Mammary epithelial cell (primary cell): ENCODE measurements at regions of chr9 and their contacts with region 1.

Region 1: GRCh38 chr9:123724211-123724796 is 205.6 kb downstream of the DENND1A start:
- DNase-seq: peak; percentile 6
- H3K4me3 ChIP-seq: no peak overlapping the region
- H3K27ac ChIP-seq: no peak overlapping the region
- H3K4me1 ChIP-seq: no peaks in the 10 kb centered on the region
- H3K27me3 ChIP-seq: no peaks in the 10 kb centered on the region
- CTCF ChIP-seq: no peak

Region 2: DNA sequence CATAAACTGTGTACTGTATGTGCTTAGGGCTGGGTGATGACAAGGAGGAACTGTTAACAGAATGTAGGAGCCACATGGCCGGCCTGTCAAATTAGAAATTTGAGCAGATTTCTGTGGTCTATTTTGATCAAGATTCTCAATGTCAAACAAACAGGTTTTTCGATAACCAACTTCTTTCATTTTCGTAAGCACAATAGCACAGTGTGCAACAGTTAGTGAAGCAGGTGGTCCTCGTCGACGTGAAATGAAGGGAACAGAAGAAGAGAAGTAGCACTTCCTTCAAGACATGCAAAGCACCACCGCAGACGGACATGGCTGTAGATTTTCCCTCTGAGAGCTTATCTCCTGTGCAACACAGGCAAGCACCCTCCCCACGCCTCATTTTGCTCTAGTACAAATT is 116.2 kb before region 1 on chr9:
- CTCF ChIA-PET with region 1: no interaction called
- dilution Hi-C with region 1: loop called (anchors 25 kb)
- in situ Hi-C with region 1: no loop called
- intact Hi-C with region 1: no loop called
- DNase-seq: no peak
- H3K4me3 ChIP-seq: no peak overlapping the region
- H3K27ac ChIP-seq: no peak overlapping the region
- H3K4me1 ChIP-seq: no peaks in the 10 kb centered on the region
- H3K27me3 ChIP-seq: no peaks in the 10 kb centered on the region
- CTCF ChIP-seq: no peak

Region 3: GRCh38 chr9:123631862-123632261 is 92.4 kb before region 1 on chr9:
- CTCF ChIA-PET with region 1: no interaction called
- dilution Hi-C with region 1: no loop called
- in situ Hi-C with region 1: no loop called
- intact Hi-C with region 1: no loop called
- DNase-seq: no peak
- H3K4me3 ChIP-seq: no peak overlapping the region
- H3K27ac ChIP-seq: no peak overlapping the region
- H3K4me1 ChIP-seq: no peaks in the 10 kb centered on the region
- H3K27me3 ChIP-seq: no peaks in the 10 kb centered on the region
- CTCF ChIP-seq: no peak

Region 4: DNA sequence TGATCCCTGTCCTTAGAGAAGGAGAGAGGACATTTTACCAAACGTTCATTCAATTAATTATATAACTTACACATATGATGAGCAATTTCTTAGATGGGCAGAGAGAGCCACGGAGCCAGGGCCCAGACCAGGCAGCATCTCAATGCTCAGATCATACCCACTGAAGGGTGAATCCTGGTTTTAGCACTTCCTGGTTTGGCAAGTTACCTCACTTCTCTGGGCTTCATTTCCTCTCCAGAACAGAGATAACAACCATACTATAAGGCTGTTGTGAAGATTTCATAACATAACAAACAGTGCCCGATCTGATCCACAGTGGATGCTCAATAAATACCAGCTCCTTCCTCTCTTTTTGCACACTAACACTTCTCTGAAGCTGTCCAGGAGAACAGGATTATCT is 65.5 kb before region 1 on chr9:
- CTCF ChIA-PET with region 1: no interaction called
- dilution Hi-C with region 1: no loop called
- in situ Hi-C with region 1: no loop called
- intact Hi-C with region 1: no loop called
- DNase-seq: no peak
- H3K4me3 ChIP-seq: no peak overlapping the region
- H3K27ac ChIP-seq: no peak overlapping the region
- H3K4me1 ChIP-seq: no peaks in the 10 kb centered on the region
- H3K27me3 ChIP-seq: no peaks in the 10 kb centered on the region
- CTCF ChIP-seq: no peak

Region 5: GRCh38 chr9:123757547-123757946 is 33.2 kb after region 1 on chr9:
- CTCF ChIA-PET with region 1: no interaction called
- dilution Hi-C with region 1: no loop called
- in situ Hi-C with region 1: no loop called
- intact Hi-C with region 1: no loop called
- DNase-seq: no peak
- H3K4me3 ChIP-seq: no peak overlapping the region
- H3K27ac ChIP-seq: no peak overlapping the region
- H3K4me1 ChIP-seq: no peaks in the 10 kb centered on the region
- H3K27me3 ChIP-seq: no peaks in the 10 kb centered on the region
- CTCF ChIP-seq: no peak